Common myeloid progenitor, CD34-positive (primary cell): ENCODE measurements at regions of chr7 and their contacts with region 1.

Region 1: GRCh38 chr7:143240291-143241168 is 18.7 kb downstream of the TAS2R40 start:
- DNase-seq: peak; percentile 83 to 89 (median 88)
- H3K4me3 ChIP-seq: no peak overlapping the region
- H3K27ac ChIP-seq: no peak overlapping the region
- H3K4me1 ChIP-seq: peaks cover 4 to 24% (median 13%) of the 10 kb centered on the region in 4 experiments
- H3K27me3 ChIP-seq: no peaks in the 10 kb centered on the region

Region 2: GRCh38 chr7:143256932-143257331 is 16.4 kb after region 1 on chr7:
- CTCF ChIA-PET with region 1: interaction called, 27 read pairs
- POLR2A ChIA-PET with region 1: no interaction called
- DNase-seq: peak in 1 of 3 donors; percentile 26
- H3K4me3 ChIP-seq: no peak overlapping the region
- H3K27ac ChIP-seq: no peak overlapping the region
- H3K4me1 ChIP-seq: peaks cover 0 to 15% (median 5%) of the 10 kb centered on the region in 4 experiments
- H3K27me3 ChIP-seq: no peaks in the 10 kb centered on the region

Region 3: DNA sequence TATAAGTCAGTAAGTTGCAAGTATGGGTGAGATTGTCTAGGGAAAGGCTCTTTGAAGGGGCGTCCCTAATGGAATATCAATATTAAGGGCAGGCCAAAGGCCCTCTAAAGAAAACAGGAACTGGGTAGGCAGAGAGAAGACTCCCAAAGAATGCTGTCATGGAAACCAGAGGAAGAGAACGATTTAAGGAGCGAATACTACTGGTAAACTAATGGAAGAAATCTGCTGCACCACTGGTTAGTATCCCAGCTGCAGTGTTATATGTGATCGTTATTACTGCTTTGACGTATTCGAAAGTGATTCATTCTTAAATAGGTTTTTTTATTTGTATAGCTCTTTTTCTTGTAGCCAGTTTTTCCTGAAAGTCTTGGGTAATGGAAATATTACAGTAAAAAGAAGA is 48.9 kb after region 1 on chr7:
- CTCF ChIA-PET with region 1: interaction called, 17 read pairs
- POLR2A ChIA-PET with region 1: no interaction called
- DNase-seq: no peak
- H3K4me3 ChIP-seq: peak overlapping the region in 6 of 7 experiments; percentile 81 to 92 (median 86)
- H3K27ac ChIP-seq: peak overlapping the region; percentile 46 to 87
- H3K4me1 ChIP-seq: peaks cover 12 to 40% (median 28%) of the 10 kb centered on the region in 4 experiments
- H3K27me3 ChIP-seq: no peaks in the 10 kb centered on the region

Region 4: DNA sequence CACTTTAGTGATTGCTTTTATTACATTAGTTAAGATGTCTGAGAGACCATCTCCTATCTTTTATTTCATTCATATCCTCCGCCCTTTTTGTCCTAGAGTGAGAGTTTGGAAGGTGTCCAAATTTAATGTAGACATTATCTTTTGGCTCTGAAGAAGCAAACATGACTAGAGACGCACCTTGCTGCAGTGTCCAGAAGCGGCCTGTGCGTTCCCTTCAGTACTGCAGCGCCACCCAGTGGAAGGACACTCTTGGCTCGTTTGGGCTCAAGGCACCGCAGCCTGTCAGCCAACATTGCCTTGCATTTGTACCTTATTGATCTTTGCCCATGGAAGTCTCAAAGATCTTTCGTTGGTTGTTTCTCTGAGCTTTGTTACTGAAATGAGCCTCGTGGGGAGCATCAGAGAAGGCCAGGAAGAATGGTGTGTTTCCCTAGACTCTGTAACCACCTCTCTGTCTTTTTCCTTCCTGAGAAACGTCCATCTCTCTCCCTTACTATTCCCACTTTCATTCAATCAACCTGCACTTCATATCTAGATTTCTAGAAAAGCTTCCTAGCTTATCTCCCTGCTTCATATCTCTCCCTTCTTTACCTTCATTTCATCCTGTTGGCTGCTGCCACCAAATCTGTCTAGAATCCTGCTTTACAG is 65.0 kb after region 1 on chr7:
- CTCF ChIA-PET with region 1: interaction called, 108 read pairs
- POLR2A ChIA-PET with region 1: no interaction called
- DNase-seq: peak; percentile 67 to 78 (median 77)
- H3K4me3 ChIP-seq: no peak overlapping the region
- H3K27ac ChIP-seq: peak overlapping the region in 1 of 2 experiments; percentile 27
- H3K4me1 ChIP-seq: peaks cover 23 to 62% (median 39%) of the 10 kb centered on the region in 4 experiments
- H3K27me3 ChIP-seq: no peaks in the 10 kb centered on the region

Region 5: GRCh38 chr7:143497008-143497795 is 256.7 kb after region 1 on chr7:
- CTCF ChIA-PET with region 1: no interaction called
- POLR2A ChIA-PET with region 1: no interaction called
- DNase-seq: no peak
- H3K4me3 ChIP-seq: no peak overlapping the region
- H3K27ac ChIP-seq: no peak overlapping the region
- H3K4me1 ChIP-seq: peaks cover 0 to 65% (median 15%) of the 10 kb centered on the region in 4 experiments
- H3K27me3 ChIP-seq: no peaks in the 10 kb centered on the region